KBM-7 (cell line): ENCODE measurements at regions of chr2 and their contacts with region 1.

Region 1: GRCh38 chr2:64330281-64331113 is 123.5 kb upstream of the LGALSL start:
- DNase-seq: peak; percentile 78

Region 2: DNA sequence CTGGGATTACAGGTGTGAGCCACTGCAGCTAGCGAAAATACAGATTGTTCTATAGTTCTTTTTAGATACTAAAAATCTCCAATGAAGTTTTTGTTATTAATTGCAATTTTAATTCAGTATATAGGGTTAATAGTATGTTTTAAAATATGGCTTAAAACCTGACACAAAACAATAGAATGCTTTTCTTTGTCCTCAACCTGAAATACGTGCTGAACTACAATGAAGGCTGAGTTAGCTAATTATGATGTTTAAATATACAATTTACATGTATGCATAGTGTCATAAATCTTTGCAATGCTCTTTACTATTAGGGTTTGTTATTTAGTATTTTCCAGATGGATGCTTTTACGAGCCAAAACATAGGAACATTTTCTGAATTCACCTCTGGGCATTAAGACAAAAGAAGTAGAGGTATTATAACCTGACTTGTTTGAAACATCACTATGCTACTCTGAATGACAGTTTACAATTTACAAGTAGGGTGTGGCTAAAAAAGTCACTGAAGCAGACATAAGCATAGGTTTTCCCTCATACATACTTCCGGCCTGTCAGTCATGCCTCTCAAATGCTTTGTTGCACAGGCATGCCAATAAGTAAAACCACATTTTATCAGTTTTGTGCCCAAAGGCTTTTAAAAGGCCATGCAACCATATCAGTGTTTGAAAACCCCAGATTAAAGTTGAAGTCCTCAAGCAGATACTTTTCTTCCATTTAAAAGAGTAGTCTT is 1111.5 kb before region 1 on chr2:
- in situ Hi-C with region 1: no loop called
- DNase-seq: peak; percentile 81

Region 3: GRCh38 chr2:63788071-63788470 is 542.4 kb before region 1 on chr2:
- in situ Hi-C with region 1: no loop called
- DNase-seq: no peak

Region 4: GRCh38 chr2:64488050-64488974 is 157.8 kb after region 1 on chr2:
- in situ Hi-C with region 1: loop called (anchors 10 kb)
- DNase-seq: peak; percentile 68

Region 5: DNA sequence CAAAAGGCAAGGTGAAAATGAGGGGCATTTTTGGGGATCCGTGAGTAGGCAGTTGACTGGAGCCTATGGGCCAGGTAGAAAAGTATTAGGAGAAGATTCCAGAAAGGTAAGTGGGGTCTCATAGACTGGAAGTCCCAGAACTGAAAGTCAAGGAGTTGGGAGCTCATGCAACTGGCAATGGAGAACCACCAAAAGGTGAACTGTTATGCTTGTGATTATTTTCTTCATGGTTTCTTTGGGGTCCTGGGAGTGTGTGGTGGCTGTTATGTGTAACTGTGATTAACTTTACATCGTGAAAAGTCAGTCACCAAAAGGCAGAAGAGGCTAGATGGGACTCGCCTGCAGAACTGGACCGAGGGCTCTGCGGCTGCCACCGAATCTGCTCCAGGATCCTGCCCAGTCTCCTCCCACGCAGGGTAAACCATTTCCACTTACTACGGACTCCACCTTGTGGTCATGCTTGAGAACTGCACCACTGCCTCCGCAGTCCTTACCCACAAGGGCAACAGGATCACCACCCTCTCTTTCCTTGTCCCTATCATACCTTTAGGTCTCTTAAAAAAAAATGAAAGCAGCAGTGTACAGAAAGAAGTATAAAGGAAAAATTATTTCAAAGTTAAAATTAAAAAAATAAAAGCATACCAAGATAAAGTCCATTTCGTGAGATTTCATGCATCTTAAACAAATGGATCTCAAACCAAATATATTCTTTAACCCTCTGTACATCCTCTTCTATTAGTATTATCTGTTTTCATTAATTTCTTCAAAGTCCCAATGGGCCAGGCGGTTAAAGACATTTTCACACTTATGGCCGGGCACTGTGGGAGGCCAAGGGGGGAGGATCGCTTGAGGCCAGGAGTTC is 710.1 kb after region 1 on chr2:
- in situ Hi-C with region 1: loop called (anchors 25 kb)
- DNase-seq: peak; percentile 84